ENCODE measurements at regions of chr2 and their contacts with region 1.

Region 1: DNA sequence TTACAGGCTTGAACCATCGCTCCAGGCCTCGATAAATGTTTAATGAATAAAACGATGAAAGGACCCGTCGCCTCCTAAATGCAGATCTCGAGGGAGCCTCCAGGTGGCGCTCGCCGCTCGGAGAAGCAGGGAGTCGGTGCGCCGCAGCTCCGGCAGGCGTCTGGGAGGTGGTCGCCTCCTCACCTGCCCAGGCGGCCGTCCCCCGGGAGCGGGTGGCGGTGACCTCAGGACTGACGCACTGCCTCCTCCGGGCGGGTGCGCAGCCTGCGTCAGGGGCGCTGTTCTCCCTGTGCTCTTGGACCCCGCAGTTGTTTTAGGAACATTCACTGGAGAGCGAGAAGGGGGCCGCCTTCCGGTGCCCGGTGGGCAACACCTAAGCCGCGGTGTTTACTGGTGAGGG is 38.6 kb upstream of the POLE4 start:
- DNase-seq: peak; percentile 89
- ATAC-seq: peak; percentile 94
- H3K4me3 Mint-ChIP-seq: peak overlapping the region; percentile 60
- H3K27ac Mint-ChIP-seq: no peak overlapping the region
- H3K4me1 Mint-ChIP-seq: no peaks in the 10 kb centered on the region
- H3K27me3 Mint-ChIP-seq: peaks cover 16% of the 10 kb centered on the region
- CTCF ChIP-seq: peak; percentile 89

Region 2: GRCh38 chr2:74653985-74654882 is 265.6 kb before region 1 on chr2 and contains the start of gene SEMA4F:
- CTCF ChIA-PET with region 1: no interaction called
- POLR2A ChIA-PET with region 1: no interaction called
- DNase-seq: peak; percentile 99
- ATAC-seq: peak; percentile 99
- H3K4me3 Mint-ChIP-seq: peak within 1 kb of the TSS; percentile 73
- H3K27ac Mint-ChIP-seq: no peak within 1 kb of the TSS
- H3K4me1 Mint-ChIP-seq: peaks cover 5% of the 10 kb centered on the region
- H3K27me3 Mint-ChIP-seq: peaks cover 68% of the 10 kb centered on the region
- CTCF ChIP-seq: no peak
- total RNA-seq, gene SEMA4F: 5.7 to 7.4 TPM (median 6.3 TPM) in 3 replicates

Region 3: DNA sequence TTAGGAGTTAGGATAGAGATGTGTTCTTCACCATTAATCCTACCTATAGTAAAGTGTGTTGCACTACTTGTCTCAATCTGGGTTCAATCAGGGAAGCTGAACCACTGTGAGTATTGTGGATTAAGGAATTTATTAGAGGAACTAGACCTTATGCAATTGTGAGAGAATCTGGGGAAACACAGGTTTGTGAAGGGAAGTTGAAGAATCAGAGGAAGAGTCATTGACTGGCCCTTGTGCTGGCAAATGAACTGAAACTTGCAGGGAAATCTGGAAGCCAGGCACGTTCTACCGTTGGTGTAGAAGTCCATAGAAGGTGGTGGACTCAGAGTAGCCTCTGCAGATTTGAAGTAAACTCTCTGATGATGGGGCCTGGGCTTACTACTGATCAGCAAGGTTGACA is 130.6 kb before region 1 on chr2:
- CTCF ChIA-PET with region 1: no interaction called
- POLR2A ChIA-PET with region 1: no interaction called
- DNase-seq: no peak
- ATAC-seq: no peak
- H3K4me3 Mint-ChIP-seq: no peak overlapping the region
- H3K27ac Mint-ChIP-seq: no peak overlapping the region
- H3K4me1 Mint-ChIP-seq: no peaks in the 10 kb centered on the region
- H3K27me3 Mint-ChIP-seq: no peaks in the 10 kb centered on the region
- CTCF ChIP-seq: no peak

Region 4: DNA sequence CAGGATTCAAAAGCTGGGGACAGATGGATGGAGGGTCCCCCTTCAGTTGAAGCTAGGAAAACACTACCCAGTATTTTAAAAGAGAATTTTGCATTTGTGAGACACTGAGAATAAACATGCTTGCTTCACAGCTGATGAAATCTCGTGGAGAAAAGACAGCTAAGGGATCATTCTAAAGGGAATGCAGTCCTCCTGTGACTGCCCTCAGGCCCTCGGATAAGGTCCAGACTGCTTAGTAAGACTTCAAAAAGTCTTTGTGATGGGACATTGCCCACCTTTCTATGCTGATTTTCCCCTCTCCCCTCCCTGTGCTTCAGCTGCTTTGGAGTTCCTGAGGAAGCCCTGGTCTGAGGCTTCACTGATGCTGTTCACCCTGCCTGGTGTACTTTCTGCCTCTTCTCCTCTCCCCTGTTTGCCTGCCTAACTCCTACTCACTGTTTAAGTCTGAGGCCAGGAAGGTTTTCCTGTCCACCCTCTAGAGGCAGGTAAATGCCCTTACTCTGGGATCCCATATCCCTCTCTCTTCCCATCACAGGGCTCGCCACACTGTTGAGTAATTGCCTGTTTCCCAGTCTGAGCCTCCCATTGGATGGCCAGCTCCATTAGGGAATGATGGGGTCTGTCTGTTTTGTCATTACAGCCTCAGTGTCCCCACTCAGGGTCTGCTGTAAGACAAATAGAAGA is 65.3 kb after region 1 on chr2:
- CTCF ChIA-PET with region 1: interaction called, 11 read pairs
- POLR2A ChIA-PET with region 1: no interaction called
- DNase-seq: no peak
- ATAC-seq: peak; percentile 98
- H3K4me3 Mint-ChIP-seq: no peak overlapping the region
- H3K27ac Mint-ChIP-seq: no peak overlapping the region
- H3K4me1 Mint-ChIP-seq: peaks cover 10% of the 10 kb centered on the region
- H3K27me3 Mint-ChIP-seq: no peaks in the 10 kb centered on the region
- CTCF ChIP-seq: no peak

Region 5: GRCh38 chr2:75055820-75056675 is 136.2 kb after region 1 on chr2:
- CTCF ChIA-PET with region 1: interaction called, 13 read pairs
- POLR2A ChIA-PET with region 1: no interaction called
- DNase-seq: peak; percentile 61
- ATAC-seq: peak; percentile 90
- H3K4me3 Mint-ChIP-seq: peak overlapping the region; percentile 43
- H3K27ac Mint-ChIP-seq: peak overlapping the region; percentile 99
- H3K4me1 Mint-ChIP-seq: peaks cover 81% of the 10 kb centered on the region
- H3K27me3 Mint-ChIP-seq: peaks cover 88% of the 10 kb centered on the region
- CTCF ChIP-seq: no peak